OCI-LY7 (cell line): ENCODE measurements at regions of chr12 and their contacts with region 1.

Region 1: DNA sequence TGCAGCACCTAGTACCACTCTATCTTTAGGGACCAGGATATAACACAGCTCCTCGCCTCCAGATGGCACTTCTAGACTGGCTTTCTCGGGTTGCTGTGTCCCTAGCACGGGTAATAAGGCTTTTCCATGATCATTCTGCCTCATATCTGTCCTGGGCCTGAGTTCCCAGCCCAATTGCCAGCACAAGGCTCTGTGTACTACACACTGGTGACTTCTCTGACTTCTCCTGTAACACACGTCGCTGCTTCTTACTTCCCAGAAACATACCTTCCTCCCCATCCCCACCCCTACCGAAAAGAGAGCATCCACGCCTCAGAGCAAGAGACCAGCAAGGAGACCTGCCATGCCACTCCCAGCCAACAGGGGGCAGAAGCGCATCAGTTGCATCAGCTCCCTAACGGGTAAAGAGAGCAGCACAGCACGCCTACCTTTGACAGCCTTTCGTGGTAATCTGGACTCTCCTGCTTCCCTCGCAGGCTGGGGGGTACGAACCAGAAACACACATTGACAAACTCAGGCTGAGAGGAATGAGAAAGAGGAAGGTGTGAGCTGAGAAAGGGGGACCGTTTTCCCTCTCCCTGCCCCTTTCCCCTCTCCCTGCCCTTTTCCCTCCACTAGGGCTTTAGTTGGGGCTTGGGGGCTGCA is 21.2 kb upstream of the ZNF740 start:
- DNase-seq: peak; percentile 92
- H3K4me3 ChIP-seq: peak overlapping the region; percentile 41
- H3K27ac ChIP-seq: no peak overlapping the region
- H3K4me1 ChIP-seq: peaks cover 11% of the 10 kb centered on the region
- CTCF ChIP-seq: peak; percentile 99

Region 2: GRCh38 chr12:53180220-53180930 is 21.1 kb after region 1 on chr12 and contains the starts of genes CSAD and ZNF740:
- CTCF ChIA-PET with region 1: no interaction called
- POLR2A ChIA-PET with region 1: interaction called, 5 read pairs
- intact Hi-C with region 1: loop called (anchors 1 kb)
- DNase-seq: peak; percentile 99
- H3K4me3 ChIP-seq: peak within 1 kb of the TSS; percentile 91
- H3K27ac ChIP-seq: peak within 1 kb of the TSS; percentile 87
- H3K4me1 ChIP-seq: peaks cover 50% of the 10 kb centered on the region
- CTCF ChIP-seq: no peak
- total RNA-seq, gene CSAD: 18.9 and 25.8 TPM in 2 replicates
- total RNA-seq, gene ZNF740: 26.1 and 31.6 TPM in 2 replicates

Region 3: DNA sequence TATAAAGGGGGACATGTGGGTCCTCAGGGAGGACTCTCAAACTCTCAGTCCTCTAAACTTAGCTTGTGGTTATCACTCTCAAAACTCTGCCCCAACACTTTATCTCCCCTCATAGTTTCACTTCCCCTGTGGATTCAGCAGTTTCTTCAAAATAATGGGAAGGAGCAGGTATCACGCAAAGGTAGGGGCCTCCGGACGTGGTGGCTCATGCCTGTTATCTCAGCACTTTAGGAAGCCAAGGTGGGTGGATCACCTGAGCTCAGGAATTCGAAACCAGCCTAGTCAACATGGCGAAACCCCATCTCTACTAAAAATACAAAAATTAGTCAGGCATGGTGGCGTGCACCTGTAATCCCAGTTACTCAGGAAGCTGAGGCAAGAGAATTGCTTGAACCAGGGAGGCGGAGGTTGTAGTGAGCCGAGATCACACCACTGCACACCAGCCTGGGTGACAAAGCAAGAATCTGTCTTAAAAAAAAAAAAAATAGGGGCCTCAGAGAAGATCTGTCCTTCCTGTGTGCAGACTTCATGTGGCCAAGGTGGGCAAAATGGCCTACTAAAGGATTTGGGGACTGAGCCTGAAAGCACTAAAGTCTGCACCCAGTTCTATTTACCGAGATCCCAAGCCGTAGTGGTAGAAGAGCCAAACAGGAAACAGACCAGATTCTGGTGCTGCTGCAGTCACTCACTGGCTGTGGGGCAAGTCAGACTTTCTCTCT is 41.3 kb after region 1 on chr12:
- CTCF ChIA-PET with region 1: interaction called, 4 read pairs
- POLR2A ChIA-PET with region 1: interaction called, 4 read pairs
- intact Hi-C with region 1: loop called (anchors 2 kb)
- DNase-seq: peak; percentile 81
- H3K4me3 ChIP-seq: peak overlapping the region; percentile 55
- H3K27ac ChIP-seq: peak overlapping the region; percentile 98
- H3K4me1 ChIP-seq: peaks cover 78% of the 10 kb centered on the region
- CTCF ChIP-seq: no peak

Region 4: DNA sequence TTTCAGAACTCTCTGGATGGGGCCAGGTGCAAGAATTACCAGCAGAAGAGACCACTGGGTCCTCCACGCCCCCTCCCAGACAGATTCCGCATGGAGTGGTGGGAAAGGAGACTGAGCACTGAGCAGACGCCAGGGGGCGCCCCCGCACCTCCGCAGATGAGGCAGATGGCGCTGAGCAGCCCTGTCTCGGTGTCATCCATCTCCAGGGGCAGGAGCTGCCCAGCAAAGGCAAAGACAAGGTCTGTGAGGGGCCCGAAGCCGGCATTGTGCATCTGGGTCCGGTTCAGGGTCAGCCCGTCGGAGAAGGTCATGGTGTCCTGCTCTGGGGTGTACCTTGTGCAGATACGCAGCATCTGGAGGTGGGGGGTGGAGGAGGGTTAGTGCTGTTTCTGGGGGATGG is 54.0 kb after region 1 on chr12:
- CTCF ChIA-PET with region 1: interaction called, 8 read pairs
- POLR2A ChIA-PET with region 1: interaction called, 12 read pairs
- intact Hi-C with region 1: loop called (anchors 1 kb)
- DNase-seq: peak; percentile 86
- H3K4me3 ChIP-seq: no peak overlapping the region
- H3K27ac ChIP-seq: no peak overlapping the region
- H3K4me1 ChIP-seq: peaks cover 87% of the 10 kb centered on the region
- CTCF ChIP-seq: peak; percentile 94

Region 5: GRCh38 chr12:53287741-53288216 is 128.5 kb after region 1 on chr12:
- CTCF ChIA-PET with region 1: no interaction called
- POLR2A ChIA-PET with region 1: interaction called, 3 read pairs
- intact Hi-C with region 1: loop called (anchors 1 kb)
- DNase-seq: peak; percentile 73
- H3K4me3 ChIP-seq: no peak overlapping the region
- H3K27ac ChIP-seq: no peak overlapping the region
- H3K4me1 ChIP-seq: no peaks in the 10 kb centered on the region
- CTCF ChIP-seq: peak; percentile 90